ENCODE measurements at regions of chr19 and their contacts with region 1.

Region 1: GRCh38 chr19:49862376-49863253 is 4.8 kb downstream of the PNKP start:
- DNase-seq: no peak
- H3K4me3 ChIP-seq: no peak overlapping the region
- H3K27ac ChIP-seq: no peak overlapping the region
- H3K4me1 ChIP-seq: peaks cover 22% of the 10 kb centered on the region
- H3K27me3 ChIP-seq: no peaks in the 10 kb centered on the region
- CTCF ChIP-seq: peak; percentile 46; the same call in 1 of the 2 replicates

Region 2: DNA sequence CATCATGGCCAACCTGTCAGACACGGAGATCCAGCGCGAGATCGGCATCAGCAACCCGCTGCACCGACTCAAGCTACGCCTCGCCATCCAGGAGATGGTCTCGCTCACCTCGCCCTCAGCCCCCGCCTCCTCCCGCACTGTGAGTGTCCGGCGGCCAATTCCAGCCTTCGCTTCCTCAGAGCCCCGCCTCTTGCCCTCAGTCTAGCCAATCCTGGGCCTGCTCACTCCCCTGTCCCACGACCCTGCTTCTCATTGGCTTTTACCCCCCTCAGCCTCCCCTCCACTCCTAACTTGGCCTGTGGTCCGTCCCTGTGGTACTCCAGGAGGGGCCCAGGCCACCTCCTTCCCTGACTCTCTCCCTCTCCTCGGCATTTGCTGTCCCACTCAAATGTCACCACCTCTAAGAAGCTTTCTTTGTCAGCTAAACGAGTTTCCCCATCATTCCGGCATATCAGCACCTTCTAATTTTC is 719.7 kb before region 1 on chr19:
- CTCF ChIA-PET with region 1: no interaction called
- POLR2A ChIA-PET with region 1: interaction called, 26 read pairs
- intact Hi-C with region 1: no loop called
- DNase-seq: peak; percentile 67 to 88
- H3K4me3 ChIP-seq: peak overlapping the region; percentile 46; the same call in 1 of the 2 replicates
- H3K27ac ChIP-seq: no peak overlapping the region
- H3K4me1 ChIP-seq: no peaks in the 10 kb centered on the region
- H3K27me3 ChIP-seq: no peaks in the 10 kb centered on the region
- CTCF ChIP-seq: no peak

Region 3: GRCh38 chr19:49727217-49728030 is 135.2 kb before region 1 on chr19:
- CTCF ChIA-PET with region 1: no interaction called
- POLR2A ChIA-PET with region 1: interaction called, 11 read pairs
- intact Hi-C with region 1: no loop called
- DNase-seq: no peak
- H3K4me3 ChIP-seq: no peak overlapping the region
- H3K27ac ChIP-seq: no peak overlapping the region
- H3K4me1 ChIP-seq: peaks cover 11% of the 10 kb centered on the region
- H3K27me3 ChIP-seq: no peaks in the 10 kb centered on the region
- CTCF ChIP-seq: no peak

Region 4: DNA sequence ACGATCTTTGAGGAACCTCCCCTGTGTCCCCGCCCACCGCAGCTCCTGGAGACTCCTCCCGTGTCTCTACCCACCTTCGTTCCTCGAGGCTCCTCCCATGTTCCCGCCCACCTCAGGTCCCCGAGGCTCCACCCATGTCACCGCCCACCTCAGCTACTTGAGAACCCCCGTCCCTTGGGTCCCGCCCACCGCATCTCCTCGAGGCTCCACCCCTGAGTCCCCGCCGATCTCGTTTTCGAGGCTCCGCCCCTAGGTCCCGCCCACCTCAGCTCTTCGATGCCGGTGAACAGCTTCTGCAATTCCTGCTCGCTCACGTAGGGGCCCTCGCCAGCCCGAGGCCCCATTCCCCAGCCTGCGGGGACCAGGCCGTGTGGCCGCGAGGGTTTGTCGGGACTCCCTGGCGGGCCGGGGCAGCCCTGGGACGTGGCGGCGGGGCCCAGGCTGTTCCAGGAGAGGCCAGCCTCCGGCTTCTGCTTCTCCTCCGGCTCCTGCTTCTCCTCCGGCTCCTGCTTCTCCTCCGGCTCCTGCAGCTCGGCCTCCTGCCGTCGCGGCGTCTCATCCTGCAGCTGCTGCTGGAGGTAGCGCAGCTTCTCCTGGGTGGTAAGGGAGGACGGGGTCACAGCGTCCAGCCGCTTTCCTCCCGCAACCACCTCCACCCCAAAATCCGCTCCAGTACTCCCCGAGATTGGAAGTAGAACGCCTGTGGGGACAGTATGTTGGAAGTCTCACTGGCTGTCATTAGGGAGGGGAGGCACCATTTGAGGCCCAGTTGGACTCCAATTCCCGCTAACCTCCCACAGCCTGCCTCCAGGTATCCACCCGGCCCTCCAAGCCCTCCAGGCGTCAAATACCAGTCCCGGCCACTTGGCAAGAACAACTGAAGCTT is 116.2 kb before region 1 on chr19:
- CTCF ChIA-PET with region 1: interaction called, 22 read pairs
- POLR2A ChIA-PET with region 1: no interaction called
- intact Hi-C with region 1: no loop called
- DNase-seq: no peak
- H3K4me3 ChIP-seq: no peak overlapping the region
- H3K27ac ChIP-seq: no peak overlapping the region
- H3K4me1 ChIP-seq: no peaks in the 10 kb centered on the region
- H3K27me3 ChIP-seq: no peaks in the 10 kb centered on the region
- CTCF ChIP-seq: no peak

Measured in PC-9 (cell line).